ENCODE measurements at regions of chr1 and their contacts with region 1.

Region 1: DNA sequence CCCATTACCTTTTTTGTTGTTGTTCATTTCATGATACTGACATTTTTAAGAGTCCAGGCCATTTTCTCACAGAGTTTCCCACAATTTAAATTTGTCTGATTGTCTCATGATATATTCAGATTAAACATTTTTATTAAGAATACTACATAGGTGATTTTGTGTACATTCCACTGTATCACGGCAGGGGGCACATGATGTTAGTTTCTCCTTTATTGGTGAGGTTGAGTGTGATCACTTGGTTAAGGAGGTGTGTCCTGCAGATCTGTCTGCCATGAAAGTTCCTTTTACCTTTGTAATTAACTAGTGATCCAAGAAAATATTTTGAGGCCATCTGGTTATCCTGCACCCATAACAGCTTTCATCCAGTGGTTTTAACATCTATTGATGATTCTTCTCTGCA is 11.8 kb downstream of the RTCA start:
- DNase-seq: no peak
- ATAC-seq: no peak
- H3K4me3 ChIP-seq: no peak overlapping the region
- H3K27ac ChIP-seq: no peak overlapping the region
- H3K4me1 ChIP-seq: peaks cover 0 to 23% (median 9%) of the 10 kb centered on the region in 9 donors
- H3K27me3 ChIP-seq: no peaks in the 10 kb centered on the region
- CTCF ChIP-seq: no peak

Region 2: DNA sequence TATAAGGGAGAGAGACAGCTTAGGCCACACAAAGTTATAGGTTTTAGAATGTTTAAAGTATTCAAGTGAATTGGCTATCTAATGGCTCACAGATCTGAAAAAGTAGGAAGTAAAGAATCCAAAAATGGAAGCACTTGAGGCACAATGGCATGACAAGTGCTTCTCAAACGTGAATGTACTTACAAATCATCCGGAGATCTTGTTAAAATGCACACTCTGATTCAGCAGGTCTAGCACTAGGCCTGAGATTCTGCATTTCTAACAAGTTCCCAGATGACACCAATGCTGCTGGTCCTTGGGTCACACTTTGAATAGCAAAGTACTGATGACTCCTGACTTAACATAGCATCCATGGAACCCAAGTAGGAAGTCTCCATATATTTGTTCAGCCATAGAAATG is 448.6 kb before region 1 on chr1:
- intact Hi-C with region 1: no loop called
- DNase-seq: no peak
- ATAC-seq: no peak
- H3K4me3 ChIP-seq: no peak overlapping the region
- H3K27ac ChIP-seq: no peak overlapping the region
- H3K4me1 ChIP-seq: no peaks in the 10 kb centered on the region
- H3K27me3 ChIP-seq: no peaks in the 10 kb centered on the region
- CTCF ChIP-seq: no peak

Region 3: DNA sequence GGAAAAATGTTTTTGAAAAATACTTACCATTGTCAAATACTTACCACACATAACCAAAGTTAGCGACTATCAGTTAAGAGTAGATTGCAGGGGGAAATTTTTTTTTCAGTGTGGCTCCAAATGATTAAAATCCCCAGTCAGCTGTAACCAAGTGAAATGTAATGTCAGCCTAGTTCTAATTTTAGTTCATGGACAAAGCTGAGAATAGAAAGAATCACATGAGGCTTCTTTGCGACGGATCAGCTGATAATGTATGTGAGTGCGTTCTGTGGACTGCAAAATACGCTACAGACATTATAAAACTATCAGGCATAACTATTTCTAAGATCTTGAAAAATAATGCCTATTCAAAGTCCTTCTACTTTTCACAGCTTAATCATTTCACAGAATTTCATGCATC is 99.8 kb before region 1 on chr1 and contains the start of gene LRRC39:
- intact Hi-C with region 1: loop called in 1 of 10 experiments (anchors 10 kb)
- DNase-seq: no peak
- ATAC-seq: peak; percentile 46 to 88 (median 80)
- H3K4me3 ChIP-seq: peak within 1 kb of the TSS in 9 of 10 donors; percentile 18 to 56 (median 51)
- H3K27ac ChIP-seq: peak within 1 kb of the TSS; percentile 16 to 82 (median 73)
- H3K4me1 ChIP-seq: peaks cover 0 to 3% (median 0%) of the 10 kb centered on the region in 9 donors
- H3K27me3 ChIP-seq: no peaks in the 10 kb centered on the region
- CTCF ChIP-seq: no peak
- total RNA-seq, gene LRRC39: 61.1 to 226 (median 135) TPM

Region 4: GRCh38 chr1:100219883-100220282 is 58.0 kb before region 1 on chr1:
- intact Hi-C with region 1: loop called in 1 of 10 experiments (anchors 10 kb)
- DNase-seq: no peak
- ATAC-seq: no peak
- H3K4me3 ChIP-seq: no peak overlapping the region
- H3K27ac ChIP-seq: no peak overlapping the region
- H3K4me1 ChIP-seq: peaks cover 0 to 13% (median 4%) of the 10 kb centered on the region in 9 donors
- H3K27me3 ChIP-seq: no peaks in the 10 kb centered on the region
- CTCF ChIP-seq: no peak